MCF 10A (cell line): ENCODE measurements at regions of chr1 and their contacts with region 1.

Region 1: DNA sequence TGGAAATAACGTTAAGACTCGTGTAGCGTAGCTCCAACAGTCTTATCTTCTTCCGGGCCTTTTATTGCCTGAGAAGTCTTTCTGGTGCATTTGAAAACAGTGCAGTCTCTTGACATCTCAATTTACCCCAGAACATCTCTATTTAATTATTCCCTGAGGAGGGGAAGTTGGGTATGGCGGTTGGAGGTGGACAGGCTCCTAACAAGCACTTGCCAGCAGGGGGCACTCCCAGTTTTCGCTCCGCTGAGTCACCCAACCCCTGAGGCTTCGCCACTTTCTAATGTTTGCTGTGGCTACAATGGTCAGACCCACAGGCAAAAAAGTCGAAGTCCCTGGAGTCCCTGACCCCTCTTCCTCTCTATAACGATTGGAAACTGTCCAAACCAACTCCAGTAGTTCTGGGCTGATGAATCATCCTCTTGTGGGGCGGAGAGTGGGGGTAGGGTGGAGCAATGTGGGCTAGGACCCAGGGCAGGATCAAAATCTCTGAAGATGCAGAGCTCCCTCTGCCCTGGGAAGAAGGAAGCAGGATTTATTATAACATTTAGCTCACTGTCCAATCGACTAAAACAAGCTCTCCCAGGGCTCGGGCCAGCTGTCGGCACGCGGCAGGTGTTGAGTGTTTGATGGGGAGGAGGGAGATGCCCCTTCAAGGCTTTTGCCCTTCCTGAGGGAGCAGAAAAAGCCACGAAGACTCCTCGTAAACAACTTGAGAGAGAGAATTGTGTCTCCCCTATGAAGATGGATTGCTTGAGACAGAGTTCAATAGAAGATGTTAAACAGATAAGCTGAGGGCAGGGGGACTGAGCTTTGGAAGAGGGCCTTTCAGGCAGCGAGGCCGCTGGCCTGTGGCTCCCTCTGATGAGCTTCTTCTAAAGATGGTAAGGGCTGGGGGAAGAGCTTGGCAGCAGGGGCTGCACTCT is 85.7 kb downstream of the BRINP2 start:
- DNase-seq: peak; percentile 96
- H3K4me3 Mint-ChIP-seq: no peak overlapping the region
- H3K27ac Mint-ChIP-seq: no peak overlapping the region
- H3K4me1 Mint-ChIP-seq: peaks cover 21% of the 10 kb centered on the region
- H3K27me3 Mint-ChIP-seq: no peaks in the 10 kb centered on the region
- CTCF ChIP-seq: peak; percentile 70

Region 2: DNA sequence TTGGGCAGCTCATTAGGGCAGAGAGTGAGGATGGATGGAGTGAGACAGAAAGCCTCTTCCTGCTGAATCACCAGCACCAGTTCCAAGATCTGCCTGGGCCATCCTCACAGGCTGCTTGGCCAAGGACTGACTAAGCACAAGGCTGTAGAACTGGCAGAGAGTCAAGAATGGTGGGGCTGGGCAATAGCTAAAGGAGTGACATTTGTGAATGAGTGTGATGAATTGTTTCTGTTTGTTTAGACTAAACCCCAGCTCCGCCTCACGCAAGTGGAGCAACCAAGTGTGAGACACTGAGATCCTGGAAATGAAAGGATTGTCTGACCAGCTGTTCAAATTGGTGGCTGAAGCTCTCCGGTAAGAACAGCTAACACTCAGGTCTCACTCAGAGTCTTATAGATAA is 47.1 kb before region 1 on chr1:
- CTCF ChIA-PET with region 1: interaction called, 3 read pairs
- POLR2A ChIA-PET with region 1: interaction called, 3 read pairs
- intact Hi-C with region 1: loop called (anchors 2 kb)
- DNase-seq: peak; percentile 100
- H3K4me3 Mint-ChIP-seq: peak overlapping the region; percentile 10
- H3K27ac Mint-ChIP-seq: peak overlapping the region; percentile 52
- H3K4me1 Mint-ChIP-seq: peaks cover 20% of the 10 kb centered on the region
- H3K27me3 Mint-ChIP-seq: no peaks in the 10 kb centered on the region
- CTCF ChIP-seq: no peak

Region 3: DNA sequence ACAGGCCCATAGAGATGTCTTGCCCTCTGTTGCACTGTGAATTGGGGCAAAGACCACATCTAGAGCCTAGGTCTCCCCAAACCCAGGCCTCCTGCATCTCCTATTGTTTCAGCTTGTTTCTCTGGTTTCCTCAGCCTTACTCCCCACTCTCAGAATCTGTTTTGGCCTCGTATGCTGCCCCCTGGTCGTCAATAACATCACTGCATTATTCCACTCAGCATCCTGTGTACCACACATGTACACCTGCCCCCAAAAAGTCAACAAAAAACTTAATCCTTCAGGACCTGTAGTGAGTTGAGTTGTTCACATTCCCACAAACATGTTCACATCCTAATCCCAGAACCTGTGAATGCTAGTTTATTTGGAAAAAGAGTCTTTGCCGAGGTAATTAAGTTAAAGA is 99.2 kb after region 1 on chr1:
- CTCF ChIA-PET with region 1: interaction called, 4 read pairs
- POLR2A ChIA-PET with region 1: no interaction called
- intact Hi-C with region 1: loop called (anchors 1 kb)
- DNase-seq: peak; percentile 70
- H3K4me3 Mint-ChIP-seq: no peak overlapping the region
- H3K27ac Mint-ChIP-seq: no peak overlapping the region
- H3K4me1 Mint-ChIP-seq: no peaks in the 10 kb centered on the region
- H3K27me3 Mint-ChIP-seq: peaks cover 22% of the 10 kb centered on the region
- CTCF ChIP-seq: peak; percentile 55

Region 4: GRCh38 chr1:177495890-177496289 is 239.5 kb after region 1 on chr1:
- CTCF ChIA-PET with region 1: no interaction called
- POLR2A ChIA-PET with region 1: no interaction called
- intact Hi-C with region 1: no loop called
- DNase-seq: no peak
- H3K4me3 Mint-ChIP-seq: no peak overlapping the region
- H3K27ac Mint-ChIP-seq: no peak overlapping the region
- H3K4me1 Mint-ChIP-seq: no peaks in the 10 kb centered on the region
- H3K27me3 Mint-ChIP-seq: no peaks in the 10 kb centered on the region
- CTCF ChIP-seq: no peak